ENCODE measurements at regions of chr20 and their contacts with region 1.

Region 1: GRCh38 chr20:34312544-34313217 is 9.5 kb upstream of the AHCY start:
- DNase-seq: peak; percentile 96
- ATAC-seq: peak; percentile 73
- H3K4me3 ChIP-seq: peak overlapping the region; percentile 53 to 77 (median 54)
- H3K27ac ChIP-seq: no peak overlapping the region
- H3K4me1 ChIP-seq: peaks cover 73% of the 10 kb centered on the region
- H3K27me3 ChIP-seq: no peaks in the 10 kb centered on the region
- CTCF ChIP-seq: peak; percentile 100
- EP300 ChIP-seq: peak in 1 of 2 experiments; percentile 33; a peak in 2 of 4 replicates
- POLR2A ChIP-seq: no peak
- RAD21 ChIP-seq: peak; percentile 100

Region 2: DNA sequence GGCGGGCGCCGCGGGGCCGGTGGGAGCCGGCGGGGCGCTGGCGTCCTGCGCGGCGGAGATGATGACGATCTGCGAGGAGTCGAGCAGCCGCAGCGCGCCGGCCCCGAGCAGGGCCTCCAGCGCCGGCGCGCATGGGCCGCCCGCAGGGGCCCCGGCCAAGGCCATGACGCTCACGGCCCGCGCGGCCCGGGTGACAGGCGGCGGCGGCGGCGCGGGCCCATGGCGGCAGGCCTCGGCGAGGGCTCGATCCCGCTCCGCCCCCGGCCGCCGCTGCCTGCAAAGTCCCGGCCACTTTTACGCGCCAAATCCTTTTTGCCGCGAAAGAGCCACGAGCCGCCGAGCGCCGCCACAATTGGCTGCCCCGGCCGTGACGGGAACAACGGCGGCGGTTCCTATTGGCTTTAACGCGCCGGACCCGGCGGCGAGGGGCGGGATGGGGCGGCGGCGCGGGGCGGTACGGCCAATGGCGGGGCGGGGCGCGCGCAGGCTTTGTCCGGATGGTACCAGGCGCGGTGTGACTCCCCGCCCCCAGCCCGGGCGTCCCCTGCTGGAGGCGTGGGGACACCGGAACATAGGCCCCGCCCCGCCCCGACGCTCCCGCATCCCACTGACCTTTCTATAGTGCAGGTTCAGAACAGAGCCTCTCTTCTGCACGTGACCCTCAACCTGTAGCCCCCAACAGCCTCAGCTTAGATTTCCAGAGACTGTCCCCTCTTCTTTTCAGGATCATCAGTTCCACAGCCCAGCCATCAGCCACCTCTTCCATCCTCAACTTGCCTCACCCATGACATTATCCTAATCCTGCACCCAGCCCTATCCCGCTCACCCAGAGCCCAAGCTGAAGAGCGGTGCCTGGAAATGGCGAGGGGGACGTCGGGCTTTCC is 626.3 kb before region 1 on chr20 and contains the start of gene E2F1:
- CTCF ChIA-PET with region 1: no interaction called
- POLR2A ChIA-PET with region 1: no interaction called
- in situ Hi-C with region 1: no loop called
- intact Hi-C with region 1: no loop called
- DNase-seq: peak; percentile 94
- ATAC-seq: peak; percentile 91
- H3K4me3 ChIP-seq: peak within 1 kb of the TSS; percentile 58 to 82 (median 65)
- H3K27ac ChIP-seq: peak within 1 kb of the TSS; percentile 56
- H3K4me1 ChIP-seq: peaks cover 63% of the 10 kb centered on the region
- H3K27me3 ChIP-seq: no peaks in the 10 kb centered on the region
- CTCF ChIP-seq: peak; percentile 82
- EP300 ChIP-seq: no peak
- POLR2A ChIP-seq: peak; percentile 42 to 51; a peak in 1 of 4 replicates
- RAD21 ChIP-seq: peak; percentile 5
- total RNA-seq, gene E2F1: 25.3 and 39.4 TPM in 2 replicates

Region 3: DNA sequence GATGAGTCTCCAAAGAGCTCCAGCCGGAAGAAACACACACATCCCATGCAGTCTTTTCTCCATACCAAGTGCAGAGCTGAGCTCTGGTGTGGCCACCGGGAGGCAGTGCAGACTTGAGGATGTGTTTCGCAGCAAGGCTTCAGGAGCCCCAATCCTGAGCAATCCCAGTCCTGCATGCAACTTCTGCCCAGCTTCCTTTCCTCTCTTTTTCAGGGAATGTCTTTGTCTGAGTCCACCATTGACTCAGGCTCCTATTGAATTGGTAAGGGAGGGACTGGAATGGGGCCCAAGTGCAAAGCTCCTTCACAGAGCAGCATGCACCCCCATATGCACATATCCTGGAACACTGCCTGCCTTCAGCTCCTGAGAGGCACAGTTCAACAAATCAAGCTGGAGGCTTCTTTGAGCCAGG is 122.0 kb before region 1 on chr20:
- CTCF ChIA-PET with region 1: no interaction called
- POLR2A ChIA-PET with region 1: interaction called, 6 read pairs
- in situ Hi-C with region 1: no loop called
- intact Hi-C with region 1: loop called (anchors 2 kb)
- DNase-seq: peak; percentile 81
- ATAC-seq: peak; percentile 99
- H3K4me3 ChIP-seq: no peak overlapping the region
- H3K27ac ChIP-seq: no peak overlapping the region
- H3K4me1 ChIP-seq: no peaks in the 10 kb centered on the region
- H3K27me3 ChIP-seq: peaks cover 5 to 56% of the 10 kb centered on the region in 2 experiments; a peak in 4 of 5 replicates
- CTCF ChIP-seq: peak; percentile 98
- EP300 ChIP-seq: no peak
- POLR2A ChIP-seq: no peak
- RAD21 ChIP-seq: peak; percentile 95

Region 4: DNA sequence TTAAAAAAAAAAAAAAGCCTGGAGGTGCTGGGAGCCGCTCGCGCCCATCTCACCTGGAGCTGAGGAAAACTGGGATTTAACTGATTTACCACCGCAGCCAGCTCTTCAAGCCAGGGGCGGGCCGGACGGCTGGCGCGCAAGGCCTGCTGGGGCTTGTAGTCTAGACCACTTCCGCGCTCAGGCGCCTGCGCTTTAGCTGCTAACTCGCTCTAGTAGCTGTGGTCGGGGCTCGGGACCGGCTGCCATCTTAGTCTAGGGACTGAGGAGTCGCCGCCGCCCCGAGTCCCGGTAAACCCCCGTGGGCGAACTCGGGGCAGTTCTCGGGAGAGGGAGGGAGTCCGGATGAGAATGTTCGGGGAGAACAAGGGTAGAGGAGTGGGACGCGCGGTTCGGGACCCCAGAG is 50.4 kb after region 1 on chr20 and contains the start of gene ITCH:
- CTCF ChIA-PET with region 1: interaction called, 8 read pairs
- POLR2A ChIA-PET with region 1: interaction called, 105 read pairs
- in situ Hi-C with region 1: loop called (anchors 5 kb)
- intact Hi-C with region 1: loop called (anchors 1 kb)
- DNase-seq: peak; percentile 97
- ATAC-seq: peak; percentile 98
- H3K4me3 ChIP-seq: peak within 1 kb of the TSS; percentile 89 to 100 (median 95)
- H3K27ac ChIP-seq: peak within 1 kb of the TSS; percentile 78
- H3K4me1 ChIP-seq: peaks cover 58% of the 10 kb centered on the region
- H3K27me3 ChIP-seq: no peaks in the 10 kb centered on the region; a peak in 1 of 5 replicates
- CTCF ChIP-seq: no peak
- EP300 ChIP-seq: no peak
- POLR2A ChIP-seq: peak; percentile 86 to 88
- RAD21 ChIP-seq: peak; percentile 15; the same call in 1 of the 2 replicates
- total RNA-seq, gene ITCH: 112 and 162 TPM in 2 replicates

Region 5: DNA sequence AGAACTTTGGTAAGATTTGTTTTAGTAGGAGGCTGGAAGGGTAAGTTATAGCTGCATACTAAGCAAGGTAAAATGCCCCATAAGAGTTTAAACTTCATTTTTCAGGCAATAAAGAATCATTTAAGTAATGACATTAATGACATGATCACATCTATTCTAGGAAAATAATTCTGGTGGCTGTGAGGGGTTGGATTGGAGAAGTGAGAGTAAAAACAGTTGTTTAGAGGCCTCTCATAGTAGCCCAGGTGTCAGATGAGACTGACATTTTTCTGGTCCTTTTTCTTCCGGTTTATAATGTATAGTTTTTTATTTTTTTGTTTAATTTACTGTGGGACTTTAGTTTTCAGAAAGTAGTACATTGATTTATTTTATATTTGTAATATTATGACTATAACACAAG is 91.2 kb after region 1 on chr20:
- CTCF ChIA-PET with region 1: interaction called, 13 read pairs
- POLR2A ChIA-PET with region 1: interaction called, 7 read pairs
- in situ Hi-C with region 1: no loop called
- intact Hi-C with region 1: loop called (anchors 1 kb)
- DNase-seq: no peak
- ATAC-seq: no peak
- H3K4me3 ChIP-seq: no peak overlapping the region
- H3K27ac ChIP-seq: peak overlapping the region; percentile 54
- H3K4me1 ChIP-seq: peaks cover 95% of the 10 kb centered on the region
- H3K27me3 ChIP-seq: no peaks in the 10 kb centered on the region
- CTCF ChIP-seq: no peak
- EP300 ChIP-seq: no peak
- POLR2A ChIP-seq: no peak
- RAD21 ChIP-seq: no peak

Region 6: DNA sequence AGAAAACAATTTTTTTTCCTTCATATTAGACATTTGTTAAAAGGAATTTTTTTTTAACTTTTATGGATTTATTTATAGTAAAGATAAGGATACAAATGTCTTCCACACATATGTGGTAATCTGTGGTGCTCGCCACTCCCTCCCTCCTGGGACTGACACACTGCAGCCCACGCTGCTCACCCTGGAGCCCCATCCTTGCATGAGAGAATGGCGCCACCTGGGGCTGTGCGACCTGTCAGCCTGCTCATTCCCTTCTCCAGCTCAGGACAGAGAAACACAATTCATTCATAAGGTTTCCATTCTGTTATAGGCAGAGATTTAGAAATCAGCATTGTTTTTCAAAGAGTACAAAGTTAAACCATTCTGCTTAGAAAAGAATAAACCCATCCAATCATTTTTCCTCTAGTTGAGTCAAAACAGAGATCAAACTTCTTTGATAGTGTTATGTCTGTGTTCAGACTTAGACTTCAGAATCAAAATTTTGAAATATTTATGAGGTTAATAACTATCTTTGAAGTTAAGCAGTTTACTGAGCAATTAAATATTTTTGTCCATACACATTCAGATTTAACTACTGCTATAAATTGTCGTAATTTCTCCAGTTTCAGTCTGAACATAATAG is 160.7 kb after region 1 on chr20:
- CTCF ChIA-PET with region 1: interaction called, 32 read pairs
- POLR2A ChIA-PET with region 1: interaction called, 7 read pairs
- in situ Hi-C with region 1: loop called (anchors 5 kb)
- intact Hi-C with region 1: loop called (anchors 1 kb)
- DNase-seq: peak; percentile 72
- ATAC-seq: peak; percentile 92
- H3K4me3 ChIP-seq: no peak overlapping the region
- H3K27ac ChIP-seq: no peak overlapping the region
- H3K4me1 ChIP-seq: peaks cover 10% of the 10 kb centered on the region
- H3K27me3 ChIP-seq: no peaks in the 10 kb centered on the region
- CTCF ChIP-seq: peak; percentile 94
- EP300 ChIP-seq: no peak
- POLR2A ChIP-seq: no peak
- RAD21 ChIP-seq: peak; percentile 85

Region 7: DNA sequence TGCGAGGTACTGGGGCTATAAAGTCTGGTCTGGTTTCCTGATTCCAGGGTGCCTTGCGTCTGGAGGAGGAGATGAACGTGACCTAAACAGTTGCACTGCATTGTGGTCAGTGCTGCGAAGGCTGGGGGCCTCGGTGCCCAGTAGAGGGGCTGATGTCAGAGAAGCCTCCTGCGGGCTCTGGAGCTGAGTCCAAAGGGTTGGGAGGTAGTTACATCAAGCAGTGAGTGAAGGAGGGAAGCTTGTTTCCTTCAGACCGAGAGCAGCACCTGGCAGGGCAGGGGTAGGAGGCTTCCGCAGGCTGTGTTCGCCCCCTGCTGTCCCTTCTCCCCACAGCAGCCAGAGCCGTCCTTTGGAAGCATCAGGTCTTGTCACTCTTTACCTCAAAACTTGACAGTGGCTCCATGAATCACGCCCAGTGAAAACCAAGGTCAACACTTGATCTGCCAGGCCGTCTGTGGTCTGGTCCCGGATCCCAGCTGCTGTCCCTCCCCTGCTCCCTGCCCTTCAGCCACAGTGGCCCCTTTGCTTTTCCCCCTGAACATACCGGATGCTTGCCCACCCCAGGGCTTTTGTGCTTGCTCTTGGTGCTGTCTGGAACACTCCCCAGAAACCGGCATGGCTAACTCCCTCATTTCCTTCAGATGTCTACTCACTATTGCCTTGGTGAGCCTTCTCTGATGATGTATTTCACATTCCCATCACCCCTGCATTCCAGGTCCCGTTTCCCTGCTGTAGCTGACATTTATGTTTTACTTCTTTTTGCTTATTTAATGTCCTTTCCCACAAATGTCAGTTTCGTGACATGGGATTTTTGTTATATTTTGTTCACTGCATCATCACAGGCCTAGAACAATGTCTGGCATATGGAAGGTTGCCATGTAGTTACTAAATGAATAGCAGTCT is 210.5 kb after region 1 on chr20:
- CTCF ChIA-PET with region 1: interaction called, 23 read pairs
- POLR2A ChIA-PET with region 1: interaction called, 13 read pairs
- in situ Hi-C with region 1: loop called (anchors 5 kb)
- intact Hi-C with region 1: loop called (anchors 1 kb)
- DNase-seq: peak; percentile 83
- ATAC-seq: peak; percentile 83
- H3K4me3 ChIP-seq: no peak overlapping the region
- H3K27ac ChIP-seq: peak overlapping the region; percentile 19
- H3K4me1 ChIP-seq: peaks cover 67% of the 10 kb centered on the region
- H3K27me3 ChIP-seq: no peaks in the 10 kb centered on the region
- CTCF ChIP-seq: peak; percentile 99
- EP300 ChIP-seq: no peak
- POLR2A ChIP-seq: no peak
- RAD21 ChIP-seq: peak; percentile 97

Region 8: GRCh38 chr20:34825530-34826362 is 513.1 kb after region 1 on chr20 and contains the start of gene NCOA6:
- CTCF ChIA-PET with region 1: no interaction called
- POLR2A ChIA-PET with region 1: no interaction called
- in situ Hi-C with region 1: no loop called
- intact Hi-C with region 1: no loop called
- DNase-seq: peak; percentile 76
- ATAC-seq: peak; percentile 69
- H3K4me3 ChIP-seq: peak within 1 kb of the TSS; percentile 87 to 100 (median 92)
- H3K27ac ChIP-seq: peak within 1 kb of the TSS; percentile 79
- H3K4me1 ChIP-seq: peaks cover 44% of the 10 kb centered on the region
- H3K27me3 ChIP-seq: peaks cover 1 to 3% of the 10 kb centered on the region in 2 experiments; a peak in 1 of 5 replicates
- CTCF ChIP-seq: no peak
- EP300 ChIP-seq: no peak
- POLR2A ChIP-seq: peak; percentile 77 to 98
- RAD21 ChIP-seq: 0 out of 2 replicates have a peak, but pooled peaks have one; percentile 2
- total RNA-seq, gene NCOA6: 11.2 and 27.2 TPM in 2 replicates